ENCODE measurements at regions of chrX and their contacts with region 1.

Region 1: GRCh38 chrX:40153335-40154249 is 55.8 kb upstream of the BCOR start:
- DNase-seq: peak; percentile 61
- H3K4me3 Mint-ChIP-seq: peak overlapping the region; percentile 75
- H3K27ac Mint-ChIP-seq: peak overlapping the region; percentile 40
- H3K4me1 Mint-ChIP-seq: peaks cover 21% of the 10 kb centered on the region
- H3K27me3 Mint-ChIP-seq: no peaks in the 10 kb centered on the region

Region 2: DNA sequence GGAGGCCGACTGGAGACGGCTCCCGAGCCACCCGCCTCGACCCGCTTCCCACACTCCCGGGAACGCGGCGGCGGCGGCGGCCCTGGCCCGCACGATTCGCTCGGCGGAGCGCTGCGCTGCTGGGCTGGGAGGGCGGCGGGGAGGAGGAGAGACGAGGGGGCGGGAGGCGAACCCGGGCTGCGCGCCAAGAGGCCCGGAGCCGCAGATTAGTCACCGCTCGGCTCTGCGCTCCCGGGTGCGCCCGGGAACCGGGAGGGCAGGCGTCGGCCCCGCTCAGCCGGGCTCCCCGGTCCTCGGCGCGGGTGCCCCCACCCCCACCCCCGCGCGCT is 44.7 kb before region 1 on chrX:
- CTCF ChIA-PET with region 1: no interaction called
- POLR2A ChIA-PET with region 1: interaction called, 11 read pairs
- DNase-seq: peak; percentile 66
- H3K4me3 Mint-ChIP-seq: peak overlapping the region; percentile 51
- H3K27ac Mint-ChIP-seq: no peak overlapping the region
- H3K4me1 Mint-ChIP-seq: peaks cover 18% of the 10 kb centered on the region
- H3K27me3 Mint-ChIP-seq: peaks cover 3% of the 10 kb centered on the region

Region 3: DNA sequence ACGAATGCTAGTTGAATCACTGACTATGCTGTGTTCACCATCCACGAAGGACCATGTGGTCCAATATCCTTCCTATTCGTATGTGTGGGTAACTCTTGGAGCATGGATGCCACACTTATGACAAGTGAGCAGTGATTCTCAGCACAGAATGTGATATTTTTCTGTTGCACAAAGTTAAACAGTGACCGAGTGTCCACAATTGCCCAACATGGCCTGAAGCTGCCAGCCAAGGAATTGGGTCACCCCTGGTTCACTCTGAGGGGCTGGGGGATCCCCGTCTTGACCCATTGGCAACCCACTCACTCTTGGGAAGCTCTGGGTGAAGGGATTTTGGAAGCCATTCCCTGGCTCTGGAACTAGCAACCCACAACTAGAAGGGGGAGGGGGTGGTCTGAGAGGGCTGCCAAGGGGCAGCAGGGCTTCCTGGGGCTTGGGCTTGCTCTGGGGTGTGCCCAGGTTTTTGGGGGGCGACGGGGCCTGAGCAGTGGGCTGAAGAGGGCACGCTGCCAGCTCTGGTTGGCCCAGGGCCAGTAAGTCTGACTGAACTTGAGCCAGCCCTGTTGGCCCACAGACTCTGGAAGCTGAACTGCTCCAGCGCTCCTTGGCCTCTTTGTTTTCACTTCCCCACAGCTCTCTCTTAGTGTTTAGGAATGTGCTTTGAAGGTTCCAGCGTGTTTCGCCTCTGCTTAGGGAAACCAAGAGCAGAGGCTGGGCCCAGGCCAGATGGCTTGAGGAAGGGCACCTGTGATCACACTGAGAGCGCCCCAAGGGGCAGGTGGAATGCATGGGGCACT is 12.7 kb before region 1 on chrX:
- CTCF ChIA-PET with region 1: no interaction called
- POLR2A ChIA-PET with region 1: no interaction called
- DNase-seq: no peak
- H3K4me3 Mint-ChIP-seq: no peak overlapping the region
- H3K27ac Mint-ChIP-seq: no peak overlapping the region
- H3K4me1 Mint-ChIP-seq: no peaks in the 10 kb centered on the region
- H3K27me3 Mint-ChIP-seq: no peaks in the 10 kb centered on the region

Region 4: DNA sequence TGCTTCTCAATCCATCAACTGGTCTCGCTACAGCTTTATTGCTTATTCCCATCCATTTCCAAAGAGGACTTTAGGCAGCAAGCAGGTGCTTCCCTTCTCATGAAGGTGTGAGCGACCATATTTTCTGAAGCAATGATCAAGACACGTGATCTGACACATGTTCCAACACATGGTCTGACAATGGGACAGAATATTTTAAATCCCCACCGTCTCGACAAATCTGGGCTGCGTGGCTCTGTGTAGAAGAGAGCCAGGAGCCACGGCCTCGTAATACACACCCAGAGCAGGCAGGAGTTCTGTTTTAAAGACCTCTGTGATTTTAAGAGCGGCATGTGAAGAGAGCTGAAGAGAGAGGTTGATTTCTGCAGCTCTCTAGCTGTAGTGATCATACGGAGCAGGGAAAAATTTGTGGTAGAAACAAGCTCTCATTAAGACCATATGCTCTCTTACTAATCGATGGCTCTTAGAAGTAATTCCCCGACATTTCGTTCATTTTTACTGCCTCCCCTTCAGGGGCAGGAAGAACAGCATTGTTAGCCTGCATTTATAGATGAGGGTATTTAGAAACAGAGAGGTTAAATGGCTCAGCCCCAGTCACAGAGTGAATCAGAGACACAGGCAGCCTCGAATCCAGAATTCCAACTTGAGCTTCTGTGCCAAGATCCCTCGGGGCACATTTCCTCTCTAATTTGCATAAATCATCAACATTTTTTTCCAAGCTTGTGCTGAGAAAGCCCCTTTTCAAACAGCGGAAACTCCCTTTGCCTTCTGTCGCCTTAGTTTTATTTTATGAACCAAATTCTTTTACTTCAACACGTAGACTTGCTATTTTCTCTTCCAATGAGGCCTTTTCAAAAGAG is 35.2 kb after region 1 on chrX:
- CTCF ChIA-PET with region 1: no interaction called
- POLR2A ChIA-PET with region 1: no interaction called
- DNase-seq: no peak
- H3K4me3 Mint-ChIP-seq: no peak overlapping the region
- H3K27ac Mint-ChIP-seq: no peak overlapping the region
- H3K4me1 Mint-ChIP-seq: peaks cover 1% of the 10 kb centered on the region
- H3K27me3 Mint-ChIP-seq: peaks cover 5% of the 10 kb centered on the region

Region 5: DNA sequence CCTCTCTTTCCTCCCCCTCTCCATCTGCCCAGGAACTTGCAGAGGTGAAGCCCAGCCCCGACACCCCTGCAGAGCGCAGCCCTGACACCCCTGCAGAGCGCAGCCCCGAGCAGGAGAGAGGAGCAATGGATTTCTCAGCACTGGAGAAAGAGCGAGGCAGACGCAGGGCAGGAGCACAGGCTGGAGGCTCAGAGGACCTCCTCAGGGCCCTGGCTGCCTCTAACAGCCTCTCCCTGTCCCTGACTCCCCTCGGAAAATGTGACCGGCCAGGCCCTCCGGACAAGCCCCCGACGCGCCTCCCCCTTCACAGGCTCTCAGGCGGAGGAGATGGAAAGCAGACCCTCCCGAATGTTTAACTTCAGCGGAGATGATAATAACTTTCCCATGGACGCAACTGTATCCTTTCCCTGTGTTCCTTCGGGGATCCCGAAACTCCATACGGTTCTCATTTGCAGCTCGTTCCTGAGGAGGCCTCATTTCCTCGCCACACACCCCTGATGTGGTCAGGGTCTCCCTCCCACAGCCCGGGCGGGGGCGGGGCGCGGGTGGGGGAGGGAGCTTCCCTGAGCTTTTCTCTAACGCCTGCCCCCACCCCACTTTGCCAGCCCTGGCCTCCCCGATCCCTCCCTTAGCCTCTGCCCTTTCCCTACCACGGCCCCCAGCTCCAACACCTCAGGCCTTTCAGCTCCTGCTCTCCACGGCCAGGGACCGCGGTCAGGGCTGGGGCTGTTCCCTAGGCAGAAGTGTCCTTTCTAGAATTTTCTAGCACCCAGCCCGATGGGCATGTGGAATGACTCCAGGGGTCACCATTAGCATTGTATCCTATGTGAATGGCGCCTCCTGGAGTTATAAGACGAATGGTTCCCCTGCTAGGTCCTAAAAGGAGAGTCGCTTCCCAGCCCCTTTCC is 145.2 kb after region 1 on chrX:
- CTCF ChIA-PET with region 1: no interaction called
- POLR2A ChIA-PET with region 1: no interaction called
- DNase-seq: no peak
- H3K4me3 Mint-ChIP-seq: no peak overlapping the region
- H3K27ac Mint-ChIP-seq: no peak overlapping the region
- H3K4me1 Mint-ChIP-seq: peaks cover 33% of the 10 kb centered on the region
- H3K27me3 Mint-ChIP-seq: peaks cover 5% of the 10 kb centered on the region

Measured in activated CD4-positive, alpha-beta memory T cell treated with anti-CD3 and anti-CD28 coated beads, Interleukin-2, amount 10 ng/mL, durations not matched to agents 7 days and 5 days (primary cell).